Calu3 (cell line): ENCODE measurements at regions of chr16 and their contacts with region 1.

Region 1: DNA sequence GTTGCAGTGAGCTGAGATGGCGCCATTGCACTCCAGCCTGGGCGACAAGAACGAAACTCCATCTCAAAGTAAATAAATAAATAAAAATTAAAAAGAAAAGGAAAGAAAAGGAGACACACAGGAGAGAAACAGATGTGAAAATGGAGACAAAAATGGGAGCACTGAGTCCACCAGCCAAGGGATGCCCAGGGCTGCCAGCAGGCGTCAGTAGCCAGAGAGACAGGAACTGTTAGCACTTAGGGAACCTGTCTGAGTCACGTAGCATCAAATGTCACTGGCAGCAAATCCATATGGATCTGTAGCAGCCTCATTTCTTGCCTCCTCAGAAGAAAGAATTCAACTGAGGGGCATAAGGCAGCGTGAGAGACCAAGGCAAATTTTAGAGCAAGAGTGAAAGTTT is 79.7 kb downstream of the CYLD start:
- DNase-seq: peak; percentile 58
- H3K4me3 Mint-ChIP-seq: no peak overlapping the region
- H3K27ac Mint-ChIP-seq: no peak overlapping the region
- H3K4me1 Mint-ChIP-seq: peaks cover 9% of the 10 kb centered on the region
- H3K27me3 Mint-ChIP-seq: peaks cover 57% of the 10 kb centered on the region
- CTCF ChIP-seq: peak; percentile 43

Region 2: DNA sequence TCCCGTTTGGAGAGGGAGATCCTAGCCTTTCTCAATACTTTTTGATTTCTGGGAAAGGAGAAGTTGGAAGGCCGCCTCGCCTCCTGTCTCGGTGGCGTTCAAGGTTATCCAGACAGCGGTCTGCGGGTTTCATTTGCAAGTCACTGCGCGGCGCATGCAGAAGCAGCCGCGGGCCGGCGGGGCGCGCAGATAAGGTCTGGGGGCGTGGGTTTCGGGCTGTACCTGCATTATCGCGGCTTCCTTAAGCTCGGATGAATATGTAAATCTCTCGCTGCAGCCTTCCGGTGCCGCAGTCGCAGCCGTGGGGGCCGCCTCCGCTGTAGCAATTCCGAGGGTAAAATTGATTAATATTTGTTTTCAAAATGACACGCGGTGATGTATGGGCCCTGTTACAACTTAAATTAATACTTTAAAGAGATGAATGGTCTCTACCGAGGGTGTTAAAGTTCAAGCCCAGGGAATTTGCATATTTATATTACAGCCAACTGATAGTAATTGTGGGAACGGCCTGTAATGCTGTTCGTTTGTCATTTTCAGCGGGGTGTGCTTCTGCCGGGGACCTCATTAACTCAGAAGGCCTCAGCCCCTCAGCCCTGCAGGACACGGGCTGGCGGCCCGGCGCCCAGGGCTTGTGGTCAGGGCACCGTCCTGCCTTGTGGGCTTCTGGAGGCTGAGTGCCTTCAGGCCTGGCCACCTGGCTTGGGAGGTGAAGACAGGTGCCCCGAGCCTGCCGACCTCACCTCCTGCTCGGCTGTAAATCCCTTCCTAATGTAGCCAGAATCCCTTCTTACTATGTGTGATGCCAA is 19.7 kb after region 1 on chr16:
- CTCF ChIA-PET with region 1: no interaction called
- intact Hi-C with region 1: no loop called
- DNase-seq: no peak
- H3K4me3 Mint-ChIP-seq: peak overlapping the region; percentile 49
- H3K27ac Mint-ChIP-seq: no peak overlapping the region
- H3K4me1 Mint-ChIP-seq: no peaks in the 10 kb centered on the region
- H3K27me3 Mint-ChIP-seq: peaks cover 53% of the 10 kb centered on the region
- CTCF ChIP-seq: no peak

Region 3: GRCh38 chr16:50868577-50868976 is 47.0 kb after region 1 on chr16:
- CTCF ChIA-PET with region 1: no interaction called
- intact Hi-C with region 1: no loop called
- DNase-seq: no peak
- H3K4me3 Mint-ChIP-seq: no peak overlapping the region
- H3K27ac Mint-ChIP-seq: no peak overlapping the region
- H3K4me1 Mint-ChIP-seq: peaks cover 22% of the 10 kb centered on the region
- H3K27me3 Mint-ChIP-seq: no peaks in the 10 kb centered on the region
- CTCF ChIP-seq: no peak

Region 4: GRCh38 chr16:51049678-51050376 is 228.2 kb after region 1 on chr16:
- CTCF ChIA-PET with region 1: no interaction called
- intact Hi-C with region 1: loop called (anchors 10 kb)
- DNase-seq: no peak
- H3K4me3 Mint-ChIP-seq: no peak overlapping the region
- H3K27ac Mint-ChIP-seq: no peak overlapping the region
- H3K4me1 Mint-ChIP-seq: no peaks in the 10 kb centered on the region
- H3K27me3 Mint-ChIP-seq: peaks cover 51% of the 10 kb centered on the region
- CTCF ChIP-seq: peak; percentile 17